T-cell (primary cell): ENCODE measurements at regions of chr15 and their contacts with region 1.

Region 1: DNA sequence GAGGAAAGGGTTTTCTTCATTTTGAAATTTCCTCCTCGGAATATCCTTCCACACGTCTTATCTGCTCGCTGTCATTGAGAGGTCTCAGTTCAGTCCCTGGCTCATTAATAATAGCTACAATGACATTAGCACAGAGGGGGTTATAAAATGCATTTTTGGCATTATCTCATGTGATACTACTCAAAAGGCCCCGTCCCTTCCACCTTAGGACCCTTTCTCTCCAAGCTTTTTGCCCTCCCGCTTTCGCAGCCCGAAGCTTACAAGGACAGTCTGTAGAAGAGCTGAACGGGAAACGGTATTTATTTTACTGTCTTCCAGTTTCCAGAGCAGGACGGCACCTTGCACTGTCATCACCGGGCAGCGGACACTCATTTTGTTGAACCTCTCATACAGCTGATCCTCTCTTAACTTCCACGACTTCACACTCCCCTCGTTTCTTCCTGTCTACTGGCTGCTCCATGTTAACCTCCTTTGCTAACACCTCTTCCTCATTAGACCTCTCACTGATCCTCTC is 5.6 kb upstream of the PLEKHO2 start:
- DNase-seq: no peak
- ATAC-seq: no peak
- H3K4me3 ChIP-seq: no peak overlapping the region
- H3K4me3 Mint-ChIP-seq: peak overlapping the region; percentile 40 to 59 (median 55)
- H3K27ac ChIP-seq: peak overlapping the region; percentile 21
- H3K27ac Mint-ChIP-seq: peak overlapping the region; percentile 73 to 85
- H3K4me1 ChIP-seq: peaks cover 19 to 43% of the 10 kb centered on the region in 2 experiments
- H3K4me1 Mint-ChIP-seq: peaks cover 49 to 58% (median 55%) of the 10 kb centered on the region in 3 donors
- H3K27me3 ChIP-seq: no peaks in the 10 kb centered on the region
- H3K27me3 Mint-ChIP-seq: no peaks in the 10 kb centered on the region

Region 2: GRCh38 chr15:63598473-63599400 is 1237.3 kb before region 1 on chr15:
- CTCF ChIA-PET with region 1: no interaction called
- POLR2A ChIA-PET with region 1: interaction called in 1 of 2 experiments, 15 read pairs
- DNase-seq: no peak
- ATAC-seq: no peak
- H3K4me3 ChIP-seq: no peak overlapping the region
- H3K4me3 Mint-ChIP-seq: peak overlapping the region; percentile 81 to 88 (median 86)
- H3K27ac ChIP-seq: no peak overlapping the region
- H3K27ac Mint-ChIP-seq: peak overlapping the region; percentile 85 to 89
- H3K4me1 ChIP-seq: peaks cover 19 to 44% of the 10 kb centered on the region in 2 experiments
- H3K4me1 Mint-ChIP-seq: peaks cover 56 to 73% (median 69%) of the 10 kb centered on the region in 3 donors
- H3K27me3 ChIP-seq: no peaks in the 10 kb centered on the region
- H3K27me3 Mint-ChIP-seq: no peaks in the 10 kb centered on the region

Region 3: DNA sequence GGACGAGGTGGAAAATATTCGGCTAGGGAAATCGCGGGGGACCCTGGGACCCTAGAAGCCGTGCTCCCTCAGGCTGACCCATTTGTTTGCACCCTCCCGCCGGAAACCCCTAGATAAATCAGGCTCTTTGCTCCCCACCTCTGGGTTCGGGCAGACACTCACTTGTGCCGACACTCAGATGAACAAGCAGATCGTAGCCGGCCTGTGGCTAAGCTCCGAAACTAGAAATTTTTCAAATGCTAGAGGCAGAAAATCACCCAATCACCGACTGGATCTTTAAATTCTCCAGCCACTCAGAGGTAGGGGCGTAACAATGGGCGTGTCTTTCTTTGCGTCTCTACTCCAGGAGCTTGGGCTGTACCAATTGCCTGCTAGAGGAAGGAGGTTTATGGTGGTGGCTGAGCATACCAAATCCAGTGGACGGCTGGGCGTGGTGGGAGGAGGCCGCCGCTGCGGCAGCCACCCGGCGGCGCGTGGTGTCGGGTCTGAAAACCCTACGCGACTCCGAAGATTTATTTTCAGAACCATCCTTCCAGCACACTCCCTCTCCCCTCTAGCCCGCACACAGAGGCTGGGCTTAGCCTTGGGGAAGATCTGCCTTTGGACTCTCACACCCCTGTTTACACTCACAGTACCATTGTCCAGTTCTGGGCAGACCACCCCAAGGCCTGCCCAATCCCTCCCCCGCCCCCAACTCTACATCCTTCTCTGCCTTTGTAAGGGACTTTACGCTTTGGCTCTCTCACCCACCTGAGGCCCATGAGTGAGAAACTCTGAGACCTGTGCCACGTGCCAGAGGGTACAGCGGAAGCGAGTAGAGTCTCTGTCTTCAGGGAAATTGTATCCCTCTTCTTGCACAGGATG is 10.4 kb before region 1 on chr15 and contains the start of gene PIF1:
- CTCF ChIA-PET with region 1: interaction called, 3 to 17 read pairs
- POLR2A ChIA-PET with region 1: interaction called in 1 of 2 experiments, 3 read pairs
- DNase-seq: peak; percentile 63 to 96 (median 86)
- ATAC-seq: peak; percentile 95 to 98 (median 97)
- H3K4me3 ChIP-seq: peak within 1 kb of the TSS; percentile 52 to 94
- H3K4me3 Mint-ChIP-seq: peak within 1 kb of the TSS; percentile 72 to 88 (median 84)
- H3K27ac ChIP-seq: peak within 1 kb of the TSS; percentile 36
- H3K27ac Mint-ChIP-seq: peak within 1 kb of the TSS; percentile 31 to 84
- H3K4me1 ChIP-seq: peaks cover 19 to 34% of the 10 kb centered on the region in 2 experiments
- H3K4me1 Mint-ChIP-seq: peaks cover 28 to 40% (median 33%) of the 10 kb centered on the region in 3 donors
- H3K27me3 ChIP-seq: peaks cover 3 to 25% of the 10 kb centered on the region in 2 experiments
- H3K27me3 Mint-ChIP-seq: peaks cover 5 to 10% of the 10 kb centered on the region in 2 donors
- total RNA-seq, gene PIF1: 0.88 to 4.1 (median 1.1) TPM

Region 4: GRCh38 chr15:64893481-64894394 is 57.7 kb after region 1 on chr15:
- CTCF ChIA-PET with region 1: interaction called, 4 to 42 read pairs
- POLR2A ChIA-PET with region 1: interaction called, 3 to 7 read pairs
- DNase-seq: peak; percentile 83 to 96 (median 92)
- ATAC-seq: peak; percentile 75 to 81 (median 80)
- H3K4me3 ChIP-seq: peak overlapping the region; percentile 38 to 48
- H3K4me3 Mint-ChIP-seq: peak overlapping the region; percentile 81 to 97 (median 82)
- H3K27ac ChIP-seq: peak overlapping the region; percentile 82
- H3K27ac Mint-ChIP-seq: peak overlapping the region; percentile 97
- H3K4me1 ChIP-seq: peaks cover 52 to 71% of the 10 kb centered on the region in 2 experiments
- H3K4me1 Mint-ChIP-seq: peaks cover 66 to 75% (median 72%) of the 10 kb centered on the region in 3 donors
- H3K27me3 ChIP-seq: no peaks in the 10 kb centered on the region
- H3K27me3 Mint-ChIP-seq: no peaks in the 10 kb centered on the region

Region 5: DNA sequence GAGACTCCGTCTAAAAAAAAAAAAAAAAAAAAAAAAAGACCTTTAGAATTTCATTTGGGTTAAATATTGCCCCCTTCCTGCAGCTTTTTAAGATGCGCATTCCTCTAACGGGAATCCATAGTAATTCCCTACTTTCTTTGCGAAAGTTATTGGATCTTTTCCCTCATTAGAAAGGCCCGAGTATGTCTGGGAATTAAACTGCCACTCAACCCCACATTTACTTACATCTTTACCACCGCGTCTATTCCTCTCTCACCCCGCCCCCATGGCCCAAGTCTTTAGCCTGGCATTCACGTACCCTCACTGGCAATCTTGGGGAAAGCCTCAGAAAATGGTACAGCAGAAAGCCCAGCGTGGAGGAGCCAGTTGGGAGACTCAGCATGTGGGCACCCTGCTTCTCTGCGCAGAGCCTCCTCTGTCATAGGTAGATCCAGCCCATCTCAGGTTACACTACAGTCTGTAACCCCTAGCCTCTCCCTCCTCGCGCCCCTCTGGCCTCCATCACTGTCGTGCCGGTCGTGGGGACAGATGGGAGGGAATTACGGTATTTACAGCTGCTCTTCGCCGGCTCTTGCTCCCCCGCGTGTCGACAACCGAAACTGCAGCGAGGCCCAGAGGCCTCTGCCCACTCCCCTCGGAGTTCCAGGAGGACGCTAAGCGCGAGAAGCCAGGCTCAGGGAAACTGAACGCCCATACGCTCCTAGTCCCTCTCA is 69.2 kb after region 1 on chr15:
- CTCF ChIA-PET with region 1: interaction called, 4 to 12 read pairs
- POLR2A ChIA-PET with region 1: interaction called in 1 of 2 experiments, 3 read pairs
- DNase-seq: peak; percentile 43 to 83 (median 73)
- ATAC-seq: peak; percentile 69 to 80 (median 76)
- H3K4me3 ChIP-seq: peak overlapping the region in 1 of 2 donors; percentile 30
- H3K4me3 Mint-ChIP-seq: peak overlapping the region; percentile 47 to 72 (median 61)
- H3K27ac ChIP-seq: no peak overlapping the region
- H3K27ac Mint-ChIP-seq: peak overlapping the region; percentile 34 to 66
- H3K4me1 ChIP-seq: peaks cover 11 to 35% of the 10 kb centered on the region in 2 experiments
- H3K4me1 Mint-ChIP-seq: peaks cover 37 to 42% (median 42%) of the 10 kb centered on the region in 3 donors
- H3K27me3 ChIP-seq: peaks cover 0 to 8% of the 10 kb centered on the region in 2 experiments
- H3K27me3 Mint-ChIP-seq: no peaks in the 10 kb centered on the region

Region 6: DNA sequence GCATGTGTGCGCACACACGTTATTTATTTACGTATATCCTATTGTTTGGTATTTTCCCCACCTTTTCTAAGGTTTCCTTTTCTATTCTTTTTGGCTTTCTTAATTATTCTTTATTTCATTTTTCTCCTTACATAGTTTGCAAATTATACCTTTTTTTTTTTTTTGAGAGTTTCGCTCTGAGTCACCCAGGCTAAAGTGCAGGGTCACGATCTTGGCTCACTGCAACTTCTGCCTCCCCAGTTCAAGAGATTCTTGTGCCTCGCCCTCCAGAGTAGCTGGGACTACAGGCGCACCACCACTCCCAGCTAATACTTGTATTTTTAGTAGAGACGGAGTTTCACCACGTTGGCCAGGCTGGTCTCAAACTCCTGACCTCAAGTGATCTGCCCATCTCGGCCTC is 395.2 kb after region 1 on chr15:
- CTCF ChIA-PET with region 1: no interaction called
- POLR2A ChIA-PET with region 1: no interaction called
- DNase-seq: no peak
- ATAC-seq: no peak
- H3K4me3 ChIP-seq: no peak overlapping the region
- H3K4me3 Mint-ChIP-seq: no peak overlapping the region
- H3K27ac ChIP-seq: no peak overlapping the region
- H3K27ac Mint-ChIP-seq: no peak overlapping the region
- H3K4me1 ChIP-seq: no peaks in the 10 kb centered on the region
- H3K4me1 Mint-ChIP-seq: no peaks in the 10 kb centered on the region
- H3K27me3 ChIP-seq: peaks cover 0 to under 1% of the 10 kb centered on the region in 2 experiments
- H3K27me3 Mint-ChIP-seq: no peaks in the 10 kb centered on the region